Heart right ventricle (tissue), 16 donors: ENCODE measurements at regions of chr6 and their contacts with region 1.

Region 1: DNA sequence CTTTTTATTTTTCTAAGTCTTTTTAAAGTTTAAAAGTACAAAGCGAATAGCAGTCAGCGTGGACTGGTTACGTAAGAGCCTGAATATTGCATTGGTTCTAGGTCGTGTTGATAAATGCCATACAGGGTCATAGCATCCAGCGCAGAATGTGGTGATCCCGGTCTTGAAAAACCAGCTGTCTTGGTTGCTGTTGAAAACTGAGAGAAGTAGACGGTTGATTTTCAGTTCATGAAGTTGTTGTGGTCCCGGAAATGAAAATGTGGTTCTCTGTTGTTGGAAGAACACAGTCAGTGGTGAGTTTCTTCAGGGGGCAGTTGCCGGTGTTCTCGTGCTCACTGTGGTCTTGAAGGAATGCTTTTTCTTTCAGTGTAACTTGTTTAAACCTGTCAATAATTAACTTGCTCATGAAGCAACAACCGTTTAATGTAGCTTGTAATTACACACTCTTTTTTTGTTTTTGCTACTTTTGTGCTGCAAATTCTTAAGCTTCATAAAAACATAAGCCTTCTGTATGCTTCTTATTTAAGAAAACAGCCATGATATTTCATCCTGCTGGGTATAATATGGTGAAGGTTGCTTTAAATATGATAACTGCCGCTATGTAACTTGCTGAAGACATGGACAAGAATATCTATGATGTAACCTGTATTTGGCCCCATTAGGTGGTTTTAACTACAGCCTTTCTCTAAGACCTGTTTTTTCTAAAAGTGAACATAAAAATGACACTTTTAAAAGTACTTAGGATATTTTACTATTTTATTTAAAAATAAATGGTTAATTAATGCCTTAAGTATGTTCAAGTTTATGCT is 64.8 kb upstream of the KIF25 start:
- DNase-seq: no peak
- ATAC-seq: no peak
- H3K4me3 ChIP-seq: no peak overlapping the region
- H3K27ac ChIP-seq: peak overlapping the region in 7 of 10 donors; percentile 11 to 91 (median 81)
- H3K4me1 ChIP-seq: peaks cover 0 to 27% (median 23%) of the 10 kb centered on the region in 9 donors
- H3K27me3 ChIP-seq: no peaks in the 10 kb centered on the region
- CTCF ChIP-seq: no peak

Region 2: DNA sequence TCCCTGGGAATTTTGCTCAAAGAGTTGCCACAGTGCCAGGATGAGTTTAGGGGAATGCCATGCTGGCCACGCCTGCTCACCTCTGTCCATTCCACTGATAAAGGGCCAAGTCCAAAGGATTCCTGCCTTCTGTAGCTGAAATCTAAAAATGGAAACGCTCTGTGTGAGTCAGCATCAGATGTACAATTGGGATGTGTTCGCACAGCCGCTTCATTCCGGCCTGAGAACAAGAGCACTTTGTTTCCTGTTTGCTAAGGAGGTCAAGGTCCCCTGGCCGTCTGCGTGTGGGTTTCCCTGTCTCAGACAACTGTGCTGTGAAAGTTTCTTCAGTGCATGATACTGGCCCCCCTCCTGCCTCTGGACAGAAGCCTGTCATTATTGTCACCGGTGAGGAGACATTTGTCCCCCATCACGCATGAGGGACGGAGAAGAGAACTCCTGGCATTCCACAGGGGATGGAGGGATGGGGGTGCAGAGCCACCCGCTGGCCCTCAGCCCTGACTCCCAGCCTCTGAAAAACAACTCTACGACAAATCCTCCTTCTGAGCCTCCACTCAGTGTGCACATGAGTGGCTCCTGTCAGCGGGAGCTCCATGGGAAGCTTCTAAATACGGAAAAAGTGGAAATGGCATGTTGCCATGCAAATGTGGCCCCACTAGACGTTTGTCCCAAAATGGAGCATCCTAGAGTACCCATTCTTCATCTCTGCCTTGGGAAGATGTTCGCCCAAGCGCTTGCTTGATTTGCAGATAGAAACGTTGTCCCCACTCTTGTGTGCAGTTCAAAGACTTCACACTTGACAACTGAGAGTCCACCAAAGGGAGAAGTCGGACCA is 249.4 kb before region 1 on chr6:
- intact Hi-C with region 1: no loop called
- DNase-seq: peak; percentile 42 to 81
- ATAC-seq: peak; percentile 79 to 92 (median 90)
- H3K4me3 ChIP-seq: no peak overlapping the region
- H3K27ac ChIP-seq: peak overlapping the region; percentile 63 to 88 (median 77)
- H3K4me1 ChIP-seq: peaks cover 16 to 63% (median 44%) of the 10 kb centered on the region in 9 donors
- H3K27me3 ChIP-seq: peaks cover 0 to 18% (median 0%) of the 10 kb centered on the region in 7 donors
- CTCF ChIP-seq: no peak

Region 3: DNA sequence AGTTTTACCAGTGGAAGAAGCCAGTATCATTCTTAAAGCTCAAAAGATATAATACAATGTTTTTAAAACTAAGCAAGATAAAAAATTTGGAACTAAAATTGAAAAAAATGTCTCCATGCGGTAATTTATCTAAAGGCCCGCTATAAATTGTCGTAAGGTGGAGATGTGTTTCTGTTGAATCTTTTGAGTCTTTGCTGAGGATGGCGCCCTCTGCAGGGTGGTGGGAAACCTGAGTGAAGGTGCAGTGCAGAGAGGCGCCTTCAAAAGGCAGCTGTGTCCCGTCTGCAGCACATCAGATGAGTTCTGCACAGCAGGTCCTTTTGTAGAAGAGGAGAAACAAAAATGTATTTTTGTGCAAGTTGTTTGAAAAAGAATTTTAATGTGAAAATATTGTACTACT is 35.4 kb after region 1 on chr6:
- intact Hi-C with region 1: loop called in 1 of 10 experiments (anchors 2 kb)
- DNase-seq: no peak
- ATAC-seq: no peak
- H3K4me3 ChIP-seq: no peak overlapping the region
- H3K27ac ChIP-seq: peak overlapping the region in 1 of 10 donors; percentile 73
- H3K4me1 ChIP-seq: peaks cover 5 to 48% (median 14%) of the 10 kb centered on the region in 9 donors
- H3K27me3 ChIP-seq: no peaks in the 10 kb centered on the region
- CTCF ChIP-seq: peak in 8 of 9 donors; percentile 13 to 52 (median 44)

Region 4: DNA sequence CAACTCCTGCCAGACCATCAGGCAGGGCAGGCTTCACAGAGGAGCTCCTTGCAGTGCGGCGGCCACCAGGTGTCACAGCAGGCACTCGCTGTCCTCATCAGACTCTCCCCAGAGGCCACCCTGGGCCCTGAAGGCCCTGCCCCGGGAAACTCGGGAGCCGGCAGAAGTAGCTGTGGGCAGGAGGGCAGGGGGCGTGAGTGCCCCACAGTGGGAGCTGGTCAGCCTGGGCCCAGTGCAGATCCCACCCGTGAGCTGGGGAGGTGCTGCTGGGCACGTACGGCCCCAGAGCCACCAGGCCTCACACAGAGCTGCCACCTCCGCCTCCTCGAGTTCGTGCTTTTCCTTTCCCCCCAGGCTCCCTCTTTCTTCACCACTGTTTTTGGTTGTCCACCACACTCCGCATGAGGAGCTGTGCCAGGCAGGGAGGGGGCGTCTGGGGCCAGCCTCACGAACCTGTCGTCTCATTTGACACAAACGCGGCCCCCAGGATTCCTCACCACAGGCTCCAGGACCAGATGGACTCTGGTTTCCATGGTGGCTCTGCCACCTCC is 112.5 kb after region 1 on chr6:
- intact Hi-C with region 1: loop called in 3 of 10 experiments (anchors 10 kb)
- DNase-seq: peak in 1 of 2 donors; percentile 37
- ATAC-seq: peak; percentile 36 to 64 (median 47)
- H3K4me3 ChIP-seq: no peak overlapping the region
- H3K27ac ChIP-seq: peak overlapping the region in 8 of 10 donors; percentile 42 to 82 (median 67)
- H3K4me1 ChIP-seq: peaks cover 6 to 24% (median 16%) of the 10 kb centered on the region in 9 donors
- H3K27me3 ChIP-seq: no peaks in the 10 kb centered on the region
- CTCF ChIP-seq: peak in 8 of 9 donors; percentile 6 to 46 (median 28)